ENCODE measurements at regions of chr9 and their contacts with region 1.

Region 1: GRCh38 chr9:110623462-110624025 is 44.0 kb upstream of the SVEP1 start:
- DNase-seq: peak; percentile 47
- ATAC-seq: no peak
- H3K4me3 ChIP-seq: no peak overlapping the region
- H3K4me3 Mint-ChIP-seq: no peak overlapping the region
- H3K27ac ChIP-seq: no peak overlapping the region
- H3K27ac Mint-ChIP-seq: no peak overlapping the region
- H3K4me1 ChIP-seq: no peaks in the 10 kb centered on the region
- H3K4me1 Mint-ChIP-seq: no peaks in the 10 kb centered on the region
- H3K27me3 ChIP-seq: peaks cover 0 to 4% (median 0%) of the 10 kb centered on the region in 4 experiments
- H3K27me3 Mint-ChIP-seq: no peaks in the 10 kb centered on the region
- CTCF ChIP-seq: peak; percentile 85

Region 2: DNA sequence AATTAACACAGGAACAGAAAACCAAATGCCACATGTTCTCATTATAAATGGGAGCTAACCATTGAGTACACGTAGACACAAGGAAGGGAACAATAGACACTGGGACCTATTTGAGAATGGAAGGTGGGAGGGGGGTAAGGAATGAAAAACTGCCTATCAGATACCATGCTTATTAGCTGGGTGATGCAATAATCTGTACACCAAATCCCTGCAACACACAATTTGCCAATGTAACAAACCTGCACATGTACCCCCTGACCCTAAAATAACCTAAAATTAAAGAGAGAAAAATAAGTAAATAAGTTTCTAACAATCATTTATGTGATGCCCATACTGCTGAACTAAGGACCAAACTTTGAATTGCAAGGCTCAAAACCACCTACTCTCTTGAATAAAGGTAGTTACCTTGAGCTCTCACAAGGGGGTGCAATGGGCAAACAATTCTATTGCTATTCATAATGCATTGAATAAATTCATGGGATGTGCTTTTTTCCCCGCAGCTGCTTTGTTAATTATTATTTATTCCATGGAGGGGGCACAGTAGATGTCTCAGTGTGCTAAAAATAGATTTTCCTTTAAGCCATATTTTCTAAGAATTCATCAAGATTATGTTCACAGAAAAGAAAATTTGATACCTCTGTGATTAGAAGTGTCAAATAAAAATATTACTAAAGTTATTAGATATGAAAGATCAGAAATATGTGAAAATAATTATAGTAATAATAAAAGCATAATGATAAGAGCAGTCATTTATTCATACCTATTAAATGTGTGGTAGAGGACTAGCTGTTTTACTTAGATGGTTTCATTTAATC is 1049.3 kb before region 1 on chr9:
- CTCF ChIA-PET with region 1: interaction called, 11 read pairs
- POLR2A ChIA-PET with region 1: no interaction called
- intact Hi-C with region 1: no loop called
- DNase-seq: peak; percentile 47
- ATAC-seq: no peak
- H3K4me3 ChIP-seq: no peak overlapping the region
- H3K4me3 Mint-ChIP-seq: no peak overlapping the region
- H3K27ac ChIP-seq: no peak overlapping the region
- H3K27ac Mint-ChIP-seq: no peak overlapping the region
- H3K4me1 ChIP-seq: no peaks in the 10 kb centered on the region
- H3K4me1 Mint-ChIP-seq: no peaks in the 10 kb centered on the region
- H3K27me3 ChIP-seq: peaks cover 0 to 4% (median 0%) of the 10 kb centered on the region in 4 experiments
- H3K27me3 Mint-ChIP-seq: peaks cover 12% of the 10 kb centered on the region
- CTCF ChIP-seq: peak; percentile 82

Region 3: DNA sequence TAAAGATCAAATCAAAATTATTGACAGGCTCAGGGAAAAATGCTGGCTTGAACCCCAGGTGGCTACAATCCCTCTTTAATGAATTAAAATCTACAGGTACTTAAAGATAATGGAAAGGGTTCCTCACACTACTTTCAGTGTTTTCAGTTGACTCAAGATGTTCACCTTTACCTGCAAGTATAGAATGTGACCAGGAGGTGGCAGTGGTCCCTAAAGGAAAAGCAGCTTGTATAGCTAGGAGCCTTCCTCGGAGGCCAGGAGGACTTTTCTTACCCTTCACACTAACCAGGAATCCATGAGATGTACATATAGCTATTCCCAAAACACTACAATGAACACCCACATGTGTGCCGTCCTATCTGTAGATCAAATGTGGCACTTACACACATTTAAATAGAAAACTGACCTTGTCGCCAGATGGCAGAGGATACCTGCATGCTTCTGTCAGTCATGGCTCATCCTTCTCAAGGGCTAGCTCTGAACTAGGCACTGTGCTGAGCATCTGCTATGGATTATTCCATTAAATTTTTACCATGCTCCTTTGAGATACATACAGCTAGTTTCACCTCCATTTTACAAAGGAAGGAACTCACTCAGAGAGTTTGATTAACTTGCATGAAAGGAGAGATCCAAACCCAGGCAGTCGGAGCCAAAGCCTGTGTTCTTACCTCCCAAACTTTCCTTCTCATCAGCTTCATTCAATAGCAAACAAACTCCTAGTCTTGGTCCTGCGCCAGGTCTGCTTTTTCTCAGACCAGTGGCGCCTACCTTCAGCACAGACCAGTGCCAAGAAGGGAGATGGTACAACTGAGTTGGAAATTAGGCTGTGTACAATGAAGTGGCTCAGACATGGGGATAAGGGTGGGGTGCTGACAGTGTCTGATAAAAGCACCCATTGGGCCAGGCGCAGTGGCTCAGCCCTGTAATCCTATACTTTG is 440.1 kb before region 1 on chr9:
- CTCF ChIA-PET with region 1: interaction called, 12 read pairs
- POLR2A ChIA-PET with region 1: no interaction called
- intact Hi-C with region 1: no loop called
- DNase-seq: peak; percentile 65
- ATAC-seq: peak; percentile 53
- H3K4me3 ChIP-seq: no peak overlapping the region
- H3K4me3 Mint-ChIP-seq: no peak overlapping the region
- H3K27ac ChIP-seq: no peak overlapping the region
- H3K27ac Mint-ChIP-seq: no peak overlapping the region
- H3K4me1 ChIP-seq: peaks cover 0 to 2% of the 10 kb centered on the region in 2 donors
- H3K4me1 Mint-ChIP-seq: peaks cover 4% of the 10 kb centered on the region
- H3K27me3 ChIP-seq: no peaks in the 10 kb centered on the region
- H3K27me3 Mint-ChIP-seq: peaks cover 6% of the 10 kb centered on the region
- CTCF ChIP-seq: peak; percentile 80

Region 4: DNA sequence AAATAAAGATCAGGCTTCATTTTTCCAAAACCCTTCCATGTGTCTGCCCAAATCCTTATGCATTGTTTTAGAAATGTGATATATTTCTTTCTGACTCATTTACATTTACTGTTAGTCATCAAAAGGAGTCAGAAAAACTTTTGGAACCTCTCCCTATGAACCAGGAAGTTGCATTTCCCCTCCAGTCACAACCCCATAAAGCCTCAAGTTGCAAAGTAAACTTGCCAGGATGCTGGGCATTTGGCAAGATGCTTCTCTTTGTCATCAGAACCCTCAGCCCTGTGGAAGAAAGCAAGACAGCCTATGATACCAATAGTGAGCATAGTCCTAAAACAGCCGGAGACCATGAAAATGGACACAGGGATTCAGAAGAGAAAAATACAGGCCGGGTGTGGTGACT is 129.2 kb after region 1 on chr9:
- CTCF ChIA-PET with region 1: no interaction called
- POLR2A ChIA-PET with region 1: no interaction called
- intact Hi-C with region 1: no loop called
- DNase-seq: no peak
- ATAC-seq: no peak
- H3K4me3 ChIP-seq: no peak overlapping the region
- H3K4me3 Mint-ChIP-seq: no peak overlapping the region
- H3K27ac ChIP-seq: no peak overlapping the region
- H3K27ac Mint-ChIP-seq: no peak overlapping the region
- H3K4me1 ChIP-seq: no peaks in the 10 kb centered on the region
- H3K4me1 Mint-ChIP-seq: no peaks in the 10 kb centered on the region
- H3K27me3 ChIP-seq: no peaks in the 10 kb centered on the region
- H3K27me3 Mint-ChIP-seq: no peaks in the 10 kb centered on the region
- CTCF ChIP-seq: no peak

Measured in B cell (primary cell).